ENCODE measurements at regions of chr10 and their contacts with region 1.

Region 1: GRCh38 chr10:86399879-86400704 is 33.5 kb upstream of the GRID1 start:
- DNase-seq: peak; percentile 91
- CTCF ChIP-seq: peak; percentile 94

Region 2: DNA sequence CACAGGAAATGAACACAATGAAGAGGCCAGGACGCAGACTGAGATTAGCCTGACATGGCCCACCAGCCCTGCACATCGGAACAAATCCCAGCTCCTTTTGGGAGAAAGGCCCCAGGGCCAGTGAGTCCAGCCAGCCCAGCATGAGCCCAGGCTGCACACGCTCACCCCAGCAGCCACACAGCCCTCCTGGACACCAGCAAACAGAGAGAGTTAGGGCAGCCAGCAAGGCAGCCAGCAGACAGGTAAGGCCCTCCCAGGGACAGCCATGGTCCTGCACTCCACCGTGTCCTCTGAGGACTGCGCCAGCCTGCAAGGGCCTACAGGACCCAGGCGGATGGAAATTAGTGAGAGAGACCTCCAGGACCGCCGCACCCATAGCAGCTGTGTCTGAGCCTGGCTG is 25.4 kb before region 1 on chr10:
- CTCF ChIA-PET with region 1: no interaction called
- POLR2A ChIA-PET with region 1: no interaction called
- DNase-seq: no peak
- CTCF ChIP-seq: no peak

Region 3: GRCh38 chr10:86389441-86390193 is 10.5 kb before region 1 on chr10:
- CTCF ChIA-PET with region 1: interaction called, 81 read pairs
- POLR2A ChIA-PET with region 1: interaction called, 6 read pairs
- DNase-seq: peak; percentile 85
- CTCF ChIP-seq: peak; percentile 14

Region 4: GRCh38 chr10:86411281-86411841 is 11.3 kb after region 1 on chr10:
- CTCF ChIA-PET with region 1: interaction called, 72 read pairs
- POLR2A ChIA-PET with region 1: interaction called, 4 read pairs
- DNase-seq: peak; percentile 48
- CTCF ChIP-seq: no peak

Region 5: DNA sequence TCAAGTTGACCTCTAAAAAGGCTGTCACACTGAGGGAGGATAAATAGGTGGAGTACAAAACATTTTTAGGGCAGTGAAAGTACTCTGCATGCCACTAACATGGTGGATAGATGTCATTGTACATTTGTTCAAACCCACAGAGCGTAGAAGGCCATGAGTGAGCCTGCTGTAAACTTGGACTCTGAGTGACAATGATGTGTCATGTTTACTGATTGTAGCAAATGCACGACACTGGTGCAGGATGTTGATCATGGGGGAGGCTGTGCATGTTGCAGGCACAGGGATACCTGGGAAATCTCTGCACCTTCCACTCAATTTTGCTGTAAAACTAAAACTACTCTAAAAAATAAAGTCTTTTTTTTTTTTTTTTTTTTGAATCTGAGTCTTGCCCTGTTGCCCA is 19.0 kb after region 1 on chr10:
- CTCF ChIA-PET with region 1: interaction called, 72 read pairs
- POLR2A ChIA-PET with region 1: interaction called, 4 read pairs
- DNase-seq: no peak
- CTCF ChIP-seq: no peak

Region 6: DNA sequence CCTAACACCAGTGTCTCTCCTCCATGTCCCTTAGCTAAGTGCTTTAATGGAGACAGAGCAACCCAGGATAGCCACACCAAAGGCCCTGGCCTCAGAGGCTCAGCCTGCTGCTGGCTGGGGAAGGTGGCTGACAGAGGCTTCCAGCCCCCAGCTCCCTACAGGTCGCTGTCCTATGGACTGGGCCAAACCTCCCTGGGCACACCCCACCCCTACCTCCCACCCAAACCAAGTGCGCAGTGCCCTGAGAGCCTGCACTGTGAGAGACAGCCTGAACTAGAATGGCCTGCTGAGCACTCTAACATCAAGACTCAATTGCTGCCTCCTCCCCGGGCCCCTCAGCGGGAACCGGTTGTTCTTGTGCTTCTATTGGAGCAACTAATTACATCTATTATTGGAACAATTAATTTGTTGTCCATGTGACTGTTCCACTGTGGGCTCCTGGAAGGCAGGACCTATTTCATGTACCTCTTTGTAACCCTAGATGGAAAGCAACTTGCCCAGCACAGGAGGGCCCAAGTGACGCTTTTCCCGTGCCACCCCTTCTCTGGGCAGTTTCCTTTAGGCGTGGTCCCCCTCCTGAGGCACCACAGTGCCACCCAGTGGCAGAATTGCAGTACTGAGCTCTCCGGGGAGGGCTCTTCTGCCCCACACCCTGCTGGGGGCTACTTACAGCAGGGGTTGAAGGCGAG is 185.1 kb after region 1 on chr10:
- CTCF ChIA-PET with region 1: interaction called, 95 read pairs
- POLR2A ChIA-PET with region 1: interaction called, 3 read pairs
- DNase-seq: peak; percentile 88
- CTCF ChIP-seq: peak; percentile 92

Measured in GM10248 (cell line).